ENCODE measurements at regions of chr2 and their contacts with region 1.

Region 1: DNA sequence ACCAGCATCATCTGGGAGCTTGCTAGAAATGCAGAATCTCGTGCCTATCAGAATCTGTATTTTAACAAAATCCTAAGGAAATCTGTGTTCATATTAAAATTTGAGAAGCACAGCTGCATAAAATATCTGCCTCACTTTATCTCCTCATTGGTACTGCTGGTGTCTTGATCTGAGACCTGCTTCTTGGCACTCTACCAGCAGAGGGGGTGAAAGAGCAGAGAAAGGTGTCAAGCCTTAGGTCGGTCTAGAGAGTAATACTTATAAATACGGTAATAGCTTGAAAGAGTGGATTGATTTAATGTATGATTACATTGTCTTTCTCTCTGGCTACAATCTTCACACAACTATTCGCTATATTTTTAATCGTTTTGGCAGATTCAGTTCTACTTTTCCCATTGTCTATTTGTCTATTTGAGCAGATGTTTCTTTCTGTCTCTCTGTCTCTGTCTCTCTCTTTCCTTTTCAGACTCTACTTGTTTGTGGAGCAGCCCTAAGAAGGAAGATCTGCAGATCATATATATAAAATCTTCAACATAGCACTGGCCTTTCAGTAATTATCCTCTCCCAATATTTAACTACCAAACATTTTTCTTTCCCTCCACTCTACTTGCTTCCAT is 1.7 kb upstream of the GCG start:
- DNase-seq: peak; percentile 82

Region 2: GRCh38 chr2:162297925-162298552 is 144.3 kb after region 1 on chr2:
- in situ Hi-C with region 1: loop called (anchors 10 kb)
- DNase-seq: peak; percentile 85

Measured in ACHN (cell line).